ENCODE measurements at regions of chr4 and their contacts with region 1.

Region 1: DNA sequence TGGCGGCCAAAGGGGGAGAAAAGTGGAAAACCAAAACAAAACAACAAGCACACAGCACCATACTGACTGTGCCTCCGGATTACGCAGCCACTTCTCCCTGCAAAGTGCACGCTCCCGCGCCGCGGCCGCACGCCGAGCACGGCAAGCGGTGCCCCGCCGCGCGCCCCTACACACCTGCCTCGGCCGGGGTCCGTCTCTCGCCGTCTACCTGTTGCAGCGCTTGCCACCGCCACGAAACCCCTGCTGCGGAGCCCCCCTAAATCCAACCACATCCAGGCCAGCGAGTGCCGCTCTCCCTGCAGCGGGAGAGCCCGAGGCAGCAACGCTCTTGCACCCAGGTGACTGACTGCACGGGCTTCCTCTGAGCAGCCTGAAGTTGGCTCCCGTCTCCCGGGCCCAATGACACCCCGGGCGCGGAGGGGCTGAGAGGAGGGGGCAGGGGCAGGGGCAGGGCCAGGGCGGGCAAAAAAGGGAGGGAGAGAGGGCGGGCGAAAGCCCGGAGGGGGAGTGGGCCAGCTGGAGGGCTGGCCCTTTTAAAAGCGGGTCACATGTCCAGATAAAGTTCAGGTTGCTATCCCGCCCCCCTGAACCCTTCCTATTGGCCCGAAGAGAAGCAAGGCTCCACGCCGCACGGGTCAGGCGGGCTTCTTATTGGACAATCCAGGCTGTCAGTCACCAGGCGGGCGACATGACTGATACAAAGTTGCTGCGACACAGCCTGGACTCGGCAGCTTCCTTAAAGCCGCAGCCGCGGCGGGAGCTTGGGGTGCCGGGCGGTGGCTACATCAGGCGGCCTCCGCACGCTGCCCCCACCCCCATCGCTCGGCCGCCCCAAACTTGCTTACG is at the start of gene NR3C2:
- DNase-seq: peak; percentile 98
- ATAC-seq: peak; percentile 94
- H3K4me3 Mint-ChIP-seq: peak within 1 kb of the TSS; percentile 99
- H3K27ac Mint-ChIP-seq: peak within 1 kb of the TSS; percentile 93
- H3K4me1 Mint-ChIP-seq: peaks cover 47% of the 10 kb centered on the region
- H3K27me3 Mint-ChIP-seq: peaks cover 11% of the 10 kb centered on the region
- total RNA-seq, gene NR3C2: 3.7 to 5.8 TPM

Region 2: GRCh38 chr4:146522098-146522868 is 1919.9 kb before region 1 on chr4:
- CTCF ChIA-PET with region 1: no interaction called
- POLR2A ChIA-PET with region 1: no interaction called
- intact Hi-C with region 1: loop called in 1 of 2 experiments (anchors 5 kb)
- DNase-seq: peak; percentile 91
- ATAC-seq: peak; percentile 77
- H3K4me3 Mint-ChIP-seq: no peak overlapping the region
- H3K27ac Mint-ChIP-seq: no peak overlapping the region
- H3K4me1 Mint-ChIP-seq: peaks cover 27% of the 10 kb centered on the region
- H3K27me3 Mint-ChIP-seq: no peaks in the 10 kb centered on the region

Region 3: DNA sequence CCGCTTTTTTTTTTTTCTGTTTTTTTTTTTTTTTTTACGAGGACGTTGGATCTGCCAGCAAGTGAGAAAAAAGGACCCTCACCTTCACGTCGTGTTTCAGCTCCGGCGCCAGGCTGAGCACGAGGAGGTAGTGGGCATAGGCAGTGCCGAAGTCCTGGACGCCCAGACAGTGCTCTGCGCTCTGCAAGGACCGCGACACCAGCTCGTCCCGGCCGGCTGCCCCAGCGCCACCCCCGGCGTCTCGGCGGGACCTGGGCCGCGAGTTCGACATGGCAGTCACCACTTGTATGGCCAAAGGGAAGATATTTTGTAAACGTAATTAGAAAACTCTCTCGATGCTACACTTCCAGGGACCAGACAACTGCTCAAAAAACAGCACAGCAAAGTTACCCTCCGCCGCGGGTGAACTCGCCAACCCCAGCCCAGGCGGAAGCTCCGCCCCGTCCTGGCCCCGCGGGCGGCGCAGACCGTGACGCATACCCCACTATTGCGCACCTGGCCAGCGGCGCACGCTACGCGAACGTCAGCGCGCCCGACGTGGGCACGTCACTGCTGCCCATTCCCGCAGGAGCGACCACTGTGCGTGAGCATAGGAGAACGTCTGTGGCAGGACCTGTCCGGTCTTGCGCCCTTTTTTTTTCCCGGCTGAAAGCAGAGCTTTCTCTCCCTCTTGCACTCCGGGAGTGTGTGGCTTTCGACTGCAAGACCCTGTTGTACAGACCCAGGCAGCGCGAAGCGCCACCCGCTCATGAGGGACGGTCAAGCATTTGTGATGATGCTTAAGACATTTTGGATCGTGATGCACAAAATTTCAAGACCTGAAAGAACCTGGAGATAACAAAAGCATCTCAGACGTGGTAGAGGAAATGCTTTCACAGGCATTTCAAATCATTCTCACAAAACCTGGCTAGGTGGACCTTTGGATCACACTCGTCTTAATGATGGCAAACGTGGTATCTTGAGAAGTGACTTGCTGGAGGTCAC is 758.2 kb before region 1 on chr4 and contains the start of gene PRMT9:
- CTCF ChIA-PET with region 1: no interaction called
- POLR2A ChIA-PET with region 1: no interaction called
- intact Hi-C with region 1: loop called in 1 of 2 experiments (anchors 5 kb)
- DNase-seq: peak; percentile 93
- ATAC-seq: peak; percentile 99
- H3K4me3 Mint-ChIP-seq: peak within 1 kb of the TSS; percentile 92
- H3K27ac Mint-ChIP-seq: peak within 1 kb of the TSS; percentile 91
- H3K4me1 Mint-ChIP-seq: peaks cover 25% of the 10 kb centered on the region
- H3K27me3 Mint-ChIP-seq: peaks cover 6% of the 10 kb centered on the region
- total RNA-seq, gene PRMT9: 6.2 to 7.5 TPM

Region 4: GRCh38 chr4:147984065-147984777 is 458.0 kb before region 1 on chr4:
- CTCF ChIA-PET with region 1: no interaction called
- POLR2A ChIA-PET with region 1: no interaction called
- intact Hi-C with region 1: loop called in 1 of 2 experiments (anchors 10 kb)
- DNase-seq: peak; percentile 29
- ATAC-seq: peak; percentile 69
- H3K4me3 Mint-ChIP-seq: no peak overlapping the region
- H3K27ac Mint-ChIP-seq: no peak overlapping the region
- H3K4me1 Mint-ChIP-seq: peaks cover 10% of the 10 kb centered on the region
- H3K27me3 Mint-ChIP-seq: no peaks in the 10 kb centered on the region

Region 5: GRCh38 chr4:148376151-148376550 is 66.1 kb before region 1 on chr4:
- CTCF ChIA-PET with region 1: interaction called, 3 read pairs
- POLR2A ChIA-PET with region 1: no interaction called
- intact Hi-C with region 1: loop called in 1 of 2 experiments (anchors 5 kb)
- DNase-seq: peak; percentile 41
- ATAC-seq: peak; percentile 39
- H3K4me3 Mint-ChIP-seq: peak overlapping the region; percentile 57
- H3K27ac Mint-ChIP-seq: peak overlapping the region; percentile 51
- H3K4me1 Mint-ChIP-seq: peaks cover 29% of the 10 kb centered on the region
- H3K27me3 Mint-ChIP-seq: no peaks in the 10 kb centered on the region